ENCODE measurements at regions of chr7 and their contacts with region 1.

Region 1: GRCh38 chr7:151637781-151638261 is 118.1 kb upstream of the RHEB start:
- DNase-seq: no peak
- H3K4me3 ChIP-seq: no peak overlapping the region
- H3K27ac ChIP-seq: peak overlapping the region; percentile 49
- H3K4me1 ChIP-seq: peaks cover 12% of the 10 kb centered on the region
- H3K27me3 ChIP-seq: no peaks in the 10 kb centered on the region
- CTCF ChIP-seq: no peak
- POLR2A ChIP-seq: no peak

Region 2: DNA sequence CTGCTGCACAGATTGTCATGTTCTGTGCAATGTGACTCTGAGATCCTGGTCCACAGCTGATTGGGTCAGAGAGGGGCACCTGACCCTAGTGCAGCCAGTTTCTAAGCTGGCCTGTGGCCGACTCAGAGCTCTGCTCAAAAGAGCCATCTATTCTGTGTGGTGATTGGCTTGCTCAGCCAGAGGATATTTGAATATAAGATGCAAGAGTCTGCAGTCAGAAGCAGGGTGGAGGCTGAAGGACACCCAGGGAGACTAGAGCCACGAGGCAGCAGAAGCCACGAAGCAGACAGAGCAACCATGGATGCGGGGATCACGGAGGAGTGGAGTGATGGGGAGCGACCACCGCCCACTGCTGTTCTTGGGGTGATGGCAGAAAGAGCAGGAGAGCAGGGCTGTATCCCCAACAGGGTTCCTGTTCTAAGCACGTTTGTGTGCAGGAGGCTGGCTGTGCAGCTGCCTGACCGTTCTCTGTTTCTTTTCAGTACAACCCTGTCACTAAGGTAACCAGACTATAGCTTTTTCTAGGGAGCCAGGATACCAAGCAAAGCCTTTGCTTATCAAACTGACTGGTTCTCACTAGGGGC is 98.6 kb before region 1 on chr7:
- intact Hi-C with region 1: no loop called
- DNase-seq: no peak
- H3K4me3 ChIP-seq: no peak overlapping the region
- H3K27ac ChIP-seq: peak overlapping the region; percentile 9
- H3K4me1 ChIP-seq: peaks cover 13% of the 10 kb centered on the region
- H3K27me3 ChIP-seq: no peaks in the 10 kb centered on the region
- CTCF ChIP-seq: no peak
- POLR2A ChIP-seq: no peak

Region 3: DNA sequence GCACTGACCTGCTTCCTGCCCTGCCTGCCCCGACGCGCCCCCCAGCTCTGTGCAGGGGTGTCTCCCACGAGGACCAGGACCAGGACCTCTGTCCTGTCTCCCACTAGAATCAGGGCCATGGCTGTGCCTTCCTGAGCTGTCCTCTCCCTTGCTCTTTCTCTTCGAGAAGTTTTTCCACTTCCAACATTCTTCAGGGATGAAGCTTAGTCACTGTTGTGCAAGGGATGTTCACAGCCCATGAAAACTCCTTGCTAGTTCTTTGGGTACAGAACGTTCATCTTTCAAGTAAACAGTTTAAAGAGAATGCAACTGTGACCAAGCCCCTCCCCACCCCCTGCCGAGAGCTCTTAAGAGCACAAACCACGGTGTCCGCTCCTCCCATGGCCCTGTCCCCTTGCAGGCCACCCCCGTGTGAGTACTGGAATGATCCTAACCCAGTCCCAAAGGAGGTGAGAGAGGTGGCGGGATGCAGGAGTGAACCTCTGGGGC is 42.9 kb after region 1 on chr7:
- intact Hi-C with region 1: loop called (anchors 5 kb)
- DNase-seq: no peak
- H3K4me3 ChIP-seq: peak overlapping the region in 1 of 2 donors; percentile 0
- H3K27ac ChIP-seq: peak overlapping the region; percentile 77
- H3K4me1 ChIP-seq: peaks cover 42% of the 10 kb centered on the region
- H3K27me3 ChIP-seq: no peaks in the 10 kb centered on the region
- CTCF ChIP-seq: no peak
- POLR2A ChIP-seq: no peak

Measured in vagina (tissue), 2 donors.